Activated naive CD4-positive, alpha-beta T cell treated with anti-CD3 and anti-CD28 coated beads for 36 hours (primary cell): ENCODE measurements at regions of chr6 and their contacts with region 1.

Region 1: GRCh38 chr6:34757687-34758274 is 476 bp downstream of the SNRPC start:
- DNase-seq: no peak
- H3K4me3 Mint-ChIP-seq: no peak overlapping the region
- H3K27ac Mint-ChIP-seq: no peak overlapping the region
- H3K4me1 Mint-ChIP-seq: peaks cover 16% of the 10 kb centered on the region
- H3K27me3 Mint-ChIP-seq: no peaks in the 10 kb centered on the region

Region 2: GRCh38 chr6:34425498-34426410 is 332.0 kb before region 1 on chr6 and contains the start of gene RPS10:
- CTCF ChIA-PET with region 1: no interaction called
- intact Hi-C with region 1: loop called (anchors 1 kb)
- DNase-seq: peak; percentile 93
- H3K4me3 Mint-ChIP-seq: peak within 1 kb of the TSS; percentile 98
- H3K27ac Mint-ChIP-seq: peak within 1 kb of the TSS; percentile 98
- H3K4me1 Mint-ChIP-seq: peaks cover 38% of the 10 kb centered on the region
- H3K27me3 Mint-ChIP-seq: no peaks in the 10 kb centered on the region
- total RNA-seq, gene RPS10: 2,718 to 2,727 TPM

Region 3: GRCh38 chr6:34671801-34672656 is 85.8 kb before region 1 on chr6:
- CTCF ChIA-PET with region 1: interaction called, 3 read pairs
- intact Hi-C with region 1: loop called (anchors 1 kb)
- DNase-seq: peak; percentile 88
- H3K4me3 Mint-ChIP-seq: peak overlapping the region; percentile 70
- H3K27ac Mint-ChIP-seq: peak overlapping the region; percentile 94
- H3K4me1 Mint-ChIP-seq: peaks cover 54% of the 10 kb centered on the region
- H3K27me3 Mint-ChIP-seq: no peaks in the 10 kb centered on the region

Region 4: DNA sequence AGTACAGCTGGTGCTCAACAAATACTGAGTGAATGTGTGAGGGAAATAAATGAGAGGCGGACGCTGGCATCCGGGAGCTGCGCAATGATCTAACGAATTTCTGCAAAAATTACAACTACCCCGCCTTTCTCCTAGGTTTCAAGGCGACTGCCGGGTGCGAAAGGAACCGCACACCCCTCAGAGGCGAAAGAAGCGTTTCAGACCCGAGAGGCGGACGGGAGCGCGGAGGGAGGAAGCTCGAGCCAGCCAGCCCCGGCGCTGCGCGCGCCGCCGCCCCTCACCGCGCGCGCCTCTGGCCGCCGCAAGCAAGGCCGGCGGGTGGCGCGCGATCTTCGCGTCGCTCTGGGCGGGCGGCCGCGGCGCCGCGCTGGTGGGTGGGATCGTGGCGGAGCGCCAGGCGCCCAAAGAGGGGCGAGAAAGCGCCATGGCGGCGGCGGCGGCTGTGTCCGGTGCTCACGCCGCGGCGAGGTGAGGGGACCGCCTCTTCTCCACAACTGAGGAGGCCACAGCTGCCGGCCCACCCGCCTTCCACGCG is 34.0 kb after region 1 on chr6 and contains the start of gene BLTP3A:
- CTCF ChIA-PET with region 1: interaction called, 6 read pairs
- intact Hi-C with region 1: loop called (anchors 1 kb)
- DNase-seq: peak; percentile 74
- H3K4me3 Mint-ChIP-seq: peak within 1 kb of the TSS; percentile 90
- H3K27ac Mint-ChIP-seq: peak within 1 kb of the TSS; percentile 86
- H3K4me1 Mint-ChIP-seq: peaks cover 14% of the 10 kb centered on the region
- H3K27me3 Mint-ChIP-seq: no peaks in the 10 kb centered on the region
- total RNA-seq, gene BLTP3A: 17.0 to 17.9 TPM

Region 5: GRCh38 chr6:36290661-36291620 is 1533.2 kb after region 1 on chr6:
- CTCF ChIA-PET with region 1: no interaction called
- intact Hi-C with region 1: no loop called
- DNase-seq: no peak
- H3K4me3 Mint-ChIP-seq: no peak overlapping the region
- H3K27ac Mint-ChIP-seq: no peak overlapping the region
- H3K4me1 Mint-ChIP-seq: peaks cover 6% of the 10 kb centered on the region
- H3K27me3 Mint-ChIP-seq: no peaks in the 10 kb centered on the region